PC-3 (cell line): ENCODE measurements at regions of chr13 and their contacts with region 1.

Region 1: GRCh38 chr13:74287724-74288169 is 153.5 kb upstream of the KLF12 start:
- DNase-seq: peak; percentile 40
- ATAC-seq: peak; percentile 23
- H3K4me3 ChIP-seq: no peak overlapping the region
- H3K27ac ChIP-seq: no peak overlapping the region
- H3K4me1 ChIP-seq: peaks cover 22% of the 10 kb centered on the region
- H3K27me3 ChIP-seq: no peaks in the 10 kb centered on the region
- CTCF ChIP-seq: no peak

Region 2: GRCh38 chr13:73835138-73835721 is 452.5 kb before region 1 on chr13:
- CTCF ChIA-PET with region 1: interaction called, 5 read pairs
- POLR2A ChIA-PET with region 1: no interaction called
- intact Hi-C with region 1: loop called (anchors 1 kb)
- DNase-seq: peak; percentile 67
- ATAC-seq: peak; percentile 27; the same call in 1 of the 2 replicates
- H3K4me3 ChIP-seq: no peak overlapping the region
- H3K27ac ChIP-seq: no peak overlapping the region
- H3K4me1 ChIP-seq: peaks cover 22% of the 10 kb centered on the region
- H3K27me3 ChIP-seq: no peaks in the 10 kb centered on the region
- CTCF ChIP-seq: peak; percentile 68

Region 3: DNA sequence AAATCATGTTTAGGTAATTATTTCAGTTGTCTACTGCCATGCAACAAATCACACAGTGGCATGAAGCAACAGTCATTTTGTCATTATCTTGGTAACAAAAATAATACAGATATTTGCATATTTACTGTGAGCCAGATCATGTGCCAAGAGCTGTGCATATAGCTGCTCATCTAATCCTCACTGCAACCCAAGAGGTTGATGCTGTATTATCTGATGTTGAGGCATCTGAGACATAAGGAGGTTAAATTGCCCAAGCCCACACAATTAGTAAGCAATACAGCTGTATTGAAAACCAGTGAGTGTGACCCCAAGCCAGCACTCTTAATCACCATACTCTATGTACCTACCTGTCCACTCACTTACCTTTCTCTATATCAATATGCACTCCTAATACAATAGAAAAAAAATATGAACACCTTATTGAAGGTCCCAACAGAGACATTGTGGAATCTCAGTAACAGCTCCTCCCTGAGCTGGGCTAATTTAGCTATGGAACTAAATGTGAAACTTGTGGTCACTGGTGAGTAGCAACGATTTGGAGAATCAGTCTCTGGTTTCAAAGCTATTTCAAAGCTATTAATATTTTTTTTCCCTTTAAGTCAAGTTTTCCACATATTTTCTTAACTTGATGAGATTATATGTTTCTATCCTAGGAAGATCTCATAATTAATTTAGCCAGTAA is 338.8 kb before region 1 on chr13:
- CTCF ChIA-PET with region 1: interaction called, 6 read pairs
- POLR2A ChIA-PET with region 1: no interaction called
- intact Hi-C with region 1: loop called (anchors 2 kb)
- DNase-seq: no peak
- ATAC-seq: no peak
- H3K4me3 ChIP-seq: no peak overlapping the region
- H3K27ac ChIP-seq: no peak overlapping the region
- H3K4me1 ChIP-seq: no peaks in the 10 kb centered on the region
- H3K27me3 ChIP-seq: no peaks in the 10 kb centered on the region
- CTCF ChIP-seq: no peak

Region 4: GRCh38 chr13:74104661-74105275 is 183.0 kb before region 1 on chr13:
- CTCF ChIA-PET with region 1: no interaction called
- POLR2A ChIA-PET with region 1: no interaction called
- intact Hi-C with region 1: no loop called
- DNase-seq: no peak
- ATAC-seq: peak; percentile 38; the same call in 1 of the 2 replicates
- H3K4me3 ChIP-seq: no peak overlapping the region
- H3K27ac ChIP-seq: no peak overlapping the region
- H3K4me1 ChIP-seq: peaks cover 2% of the 10 kb centered on the region
- H3K27me3 ChIP-seq: no peaks in the 10 kb centered on the region
- CTCF ChIP-seq: no peak

Region 5: DNA sequence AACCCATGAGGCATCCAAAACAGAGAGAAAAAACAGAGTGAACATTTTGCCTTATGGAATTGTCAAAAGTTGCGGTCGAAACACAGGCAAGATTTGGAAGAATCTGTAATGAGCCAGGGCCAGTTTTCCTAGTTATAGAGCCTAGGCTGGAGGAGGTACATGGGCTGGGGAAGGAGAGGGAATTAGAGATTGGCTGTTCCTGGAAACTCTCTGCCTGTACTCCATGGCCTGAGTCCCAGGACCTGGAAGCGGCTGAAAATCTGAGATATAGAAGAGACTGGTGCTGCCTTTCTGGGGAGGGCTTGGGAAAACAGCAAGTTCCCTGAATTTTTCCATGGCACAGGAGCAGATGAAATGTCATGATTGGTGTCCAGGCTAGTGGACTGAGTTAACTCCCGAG is 30.8 kb before region 1 on chr13:
- CTCF ChIA-PET with region 1: no interaction called
- POLR2A ChIA-PET with region 1: no interaction called
- intact Hi-C with region 1: no loop called
- DNase-seq: no peak
- ATAC-seq: no peak
- H3K4me3 ChIP-seq: no peak overlapping the region
- H3K27ac ChIP-seq: no peak overlapping the region
- H3K4me1 ChIP-seq: peaks cover 6% of the 10 kb centered on the region; the same call in 1 of the 2 replicates
- H3K27me3 ChIP-seq: no peaks in the 10 kb centered on the region
- CTCF ChIP-seq: no peak